ENCODE measurements at regions of chr9 and their contacts with region 1.

Region 1: DNA sequence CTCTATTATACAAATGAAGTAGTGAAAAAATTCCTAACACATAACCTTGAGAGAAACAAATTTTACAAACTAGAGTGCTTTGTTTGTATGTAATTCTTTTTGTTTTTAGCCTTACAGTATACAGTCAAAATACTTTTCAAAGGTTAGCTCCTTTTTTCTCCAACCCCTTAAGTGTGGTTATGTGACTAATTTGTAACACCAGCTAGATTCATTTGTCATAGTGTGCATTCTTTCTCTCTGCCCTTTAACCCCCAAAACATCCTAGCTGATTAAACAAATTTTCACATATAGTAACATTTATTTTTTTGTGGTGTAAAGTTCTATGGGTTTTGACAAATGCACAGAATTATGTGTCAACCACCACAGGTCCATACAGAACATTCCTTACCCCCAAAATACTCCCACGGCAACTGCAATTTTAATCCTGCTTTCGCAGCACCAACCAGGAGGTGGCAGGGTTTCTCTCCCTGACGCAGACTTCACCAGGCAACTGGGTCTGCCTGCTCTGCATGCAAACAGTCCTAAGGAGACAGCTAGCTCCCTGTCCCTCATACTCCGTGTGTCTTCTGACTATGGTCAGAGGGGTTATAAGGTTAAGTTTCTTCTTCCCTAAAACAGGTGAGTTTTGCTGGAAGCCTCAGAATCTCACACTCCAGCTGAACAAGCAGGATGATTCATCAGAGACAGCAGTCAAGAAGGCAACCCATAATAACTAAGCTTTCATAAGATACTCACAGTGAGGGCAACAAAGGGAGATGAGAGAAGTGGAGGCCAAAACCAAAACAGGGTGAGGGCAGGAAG is 44.5 kb upstream of the NR5A1 start:
- DNase-seq: peak; percentile 34
- H3K4me3 ChIP-seq: no peak overlapping the region
- H3K27ac ChIP-seq: no peak overlapping the region
- H3K27me3 ChIP-seq: peaks cover 6% of the 10 kb centered on the region
- CTCF ChIP-seq: peak; percentile 87

Region 2: DNA sequence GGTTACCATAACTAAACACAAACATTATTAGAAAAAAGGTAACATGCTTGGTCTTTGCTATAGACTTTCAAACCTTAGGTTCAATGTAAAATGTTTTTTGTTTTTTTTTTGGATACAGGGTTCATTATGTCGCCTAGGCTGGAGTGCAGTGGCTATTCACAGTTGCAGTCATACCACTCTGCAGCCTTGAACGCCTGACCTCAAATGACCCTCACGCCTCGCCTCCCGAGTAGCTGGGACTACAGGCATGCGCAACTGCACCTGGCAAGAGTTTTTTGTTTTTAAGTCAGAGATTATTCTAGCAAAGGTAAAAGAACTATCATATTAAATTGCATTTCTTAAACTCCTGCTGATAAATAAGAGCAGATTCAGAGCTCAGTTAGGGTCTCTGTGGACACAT is 10.7 kb after region 1 on chr9:
- CTCF ChIA-PET with region 1: interaction called, 12 read pairs
- POLR2A ChIA-PET with region 1: no interaction called
- DNase-seq: no peak
- H3K4me3 ChIP-seq: no peak overlapping the region
- H3K27ac ChIP-seq: no peak overlapping the region
- H3K27me3 ChIP-seq: no peaks in the 10 kb centered on the region
- CTCF ChIP-seq: no peak

Region 3: GRCh38 chr9:124658165-124659017 is 106.7 kb after region 1 on chr9:
- CTCF ChIA-PET with region 1: interaction called, 15 read pairs
- POLR2A ChIA-PET with region 1: interaction called, 9 read pairs
- DNase-seq: peak; percentile 93
- H3K4me3 ChIP-seq: peak overlapping the region; percentile 71
- H3K27ac ChIP-seq: peak overlapping the region; percentile 93
- H3K27me3 ChIP-seq: no peaks in the 10 kb centered on the region
- CTCF ChIP-seq: no peak

Region 4: GRCh38 chr9:124754289-124754688 is 202.6 kb after region 1 on chr9:
- CTCF ChIA-PET with region 1: interaction called, 12 read pairs
- POLR2A ChIA-PET with region 1: no interaction called
- DNase-seq: no peak
- H3K4me3 ChIP-seq: no peak overlapping the region
- H3K27ac ChIP-seq: no peak overlapping the region
- H3K27me3 ChIP-seq: peaks cover 15% of the 10 kb centered on the region
- CTCF ChIP-seq: peak; percentile 80

Region 5: GRCh38 chr9:124764774-124765438 is 213.2 kb after region 1 on chr9:
- CTCF ChIA-PET with region 1: interaction called, 11 read pairs
- POLR2A ChIA-PET with region 1: no interaction called
- DNase-seq: no peak
- H3K4me3 ChIP-seq: no peak overlapping the region
- H3K27ac ChIP-seq: no peak overlapping the region
- H3K27me3 ChIP-seq: peaks cover 86% of the 10 kb centered on the region
- CTCF ChIP-seq: peak; percentile 39